ENCODE measurements at regions of chr2 and their contacts with region 1.

Region 1: GRCh38 chr2:158998551-158999248 is 30.3 kb downstream of the TANC1 start:
- H3K4me3 ChIP-seq: no peak overlapping the region
- H3K27ac ChIP-seq: peak overlapping the region; percentile 34; the same call in 1 of the 2 replicates
- H3K4me1 ChIP-seq: peaks cover 55% of the 10 kb centered on the region
- CTCF ChIP-seq: no peak

Region 2: GRCh38 chr2:158443612-158444011 is 555.1 kb before region 1 on chr2:
- CTCF ChIA-PET with region 1: no interaction called
- POLR2A ChIA-PET with region 1: no interaction called
- H3K4me3 ChIP-seq: no peak overlapping the region
- H3K27ac ChIP-seq: no peak overlapping the region
- H3K4me1 ChIP-seq: no peaks in the 10 kb centered on the region
- CTCF ChIP-seq: no peak

Region 3: DNA sequence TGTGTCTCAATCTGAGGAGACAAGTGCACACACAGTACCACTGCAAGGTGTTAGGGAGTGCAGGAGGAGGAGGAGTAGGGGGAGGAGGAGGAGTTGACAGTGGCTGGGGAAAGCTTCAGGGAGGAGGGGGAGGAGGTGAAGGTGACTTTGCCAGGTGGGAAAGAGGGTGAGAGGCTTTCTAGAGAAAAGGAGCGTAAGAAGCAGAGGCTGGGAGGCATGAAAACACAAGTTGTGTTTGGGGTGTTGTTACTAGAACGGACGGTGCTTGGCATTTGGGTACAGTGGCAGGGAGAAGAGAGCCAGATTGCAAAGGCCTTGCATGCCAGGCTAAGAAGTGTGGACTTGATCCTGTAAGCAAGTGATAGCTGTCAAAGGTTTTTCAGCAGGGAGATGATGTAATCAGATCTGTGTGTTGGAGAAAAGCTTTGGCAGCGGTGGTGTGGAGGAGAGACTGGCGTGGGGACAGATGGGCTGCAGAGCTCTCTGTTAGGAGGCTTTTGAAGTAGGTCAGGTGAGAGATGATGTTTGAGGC is 14.0 kb before region 1 on chr2:
- CTCF ChIA-PET with region 1: interaction called, 11 read pairs
- POLR2A ChIA-PET with region 1: interaction called, 3 read pairs
- H3K4me3 ChIP-seq: no peak overlapping the region
- H3K27ac ChIP-seq: no peak overlapping the region; the same call in 1 of the 2 replicates
- H3K4me1 ChIP-seq: peaks cover 17% of the 10 kb centered on the region
- CTCF ChIP-seq: no peak

Region 4: GRCh38 chr2:159010340-159010739 is 11.6 kb after region 1 on chr2:
- CTCF ChIA-PET with region 1: interaction called, 14 read pairs
- POLR2A ChIA-PET with region 1: no interaction called
- H3K4me3 ChIP-seq: no peak overlapping the region
- H3K27ac ChIP-seq: no peak overlapping the region
- H3K4me1 ChIP-seq: peaks cover 14% of the 10 kb centered on the region
- CTCF ChIP-seq: no peak

Region 5: GRCh38 chr2:159022019-159022418 is 23.3 kb after region 1 on chr2:
- CTCF ChIA-PET with region 1: no interaction called
- POLR2A ChIA-PET with region 1: no interaction called
- H3K4me3 ChIP-seq: no peak overlapping the region
- H3K27ac ChIP-seq: no peak overlapping the region
- H3K4me1 ChIP-seq: no peaks in the 10 kb centered on the region
- CTCF ChIP-seq: no peak

Region 6: GRCh38 chr2:159044804-159045286 is 46.1 kb after region 1 on chr2:
- CTCF ChIA-PET with region 1: no interaction called
- POLR2A ChIA-PET with region 1: no interaction called
- H3K4me3 ChIP-seq: no peak overlapping the region
- H3K27ac ChIP-seq: no peak overlapping the region
- H3K4me1 ChIP-seq: peaks cover 9% of the 10 kb centered on the region
- CTCF ChIP-seq: no peak